ENCODE measurements at regions of chr17 and their contacts with region 1.

Region 1: DNA sequence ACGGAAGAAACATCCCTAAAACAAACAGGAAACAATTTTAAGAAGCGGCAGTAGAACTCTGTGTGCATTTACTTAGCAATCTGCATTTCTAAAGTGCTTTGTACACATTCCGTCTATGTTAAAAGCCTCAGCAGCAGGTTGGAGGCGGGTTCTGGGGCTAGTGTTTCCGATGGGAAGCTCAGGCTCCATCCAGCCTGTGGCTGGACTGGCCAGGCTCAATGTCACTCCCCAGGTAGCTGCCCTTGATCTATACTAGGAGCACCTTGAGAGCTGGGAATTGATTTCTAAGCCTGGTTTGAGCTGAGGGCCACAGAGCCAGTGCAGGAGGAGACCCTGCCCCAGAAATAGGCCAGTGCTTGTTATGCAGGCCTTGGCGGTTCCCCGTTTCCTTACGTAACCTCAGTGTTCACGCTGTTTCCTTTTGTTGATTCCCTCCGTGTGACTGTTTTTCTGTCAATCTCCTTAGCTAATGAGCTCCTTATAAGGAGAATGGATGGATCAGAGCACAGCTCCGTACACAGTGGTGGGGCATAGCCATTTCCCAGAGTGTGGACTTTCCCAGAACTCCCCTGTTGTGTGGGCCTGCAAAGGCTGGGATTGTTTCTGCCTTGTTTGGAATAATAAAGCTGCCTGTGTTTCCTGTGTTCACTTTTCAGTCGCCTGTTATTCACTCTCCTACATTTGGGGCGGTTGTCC is 21.4 kb downstream of the ADORA2B start:
- DNase-seq: no peak
- ATAC-seq: no peak
- H3K4me3 ChIP-seq: no peak overlapping the region
- H3K27ac ChIP-seq: peak overlapping the region; percentile 14 to 52 (median 32)
- H3K4me1 ChIP-seq: no peaks in the 10 kb centered on the region
- H3K27me3 ChIP-seq: no peaks in the 10 kb centered on the region
- CTCF ChIP-seq: no peak
- POLR2A ChIP-seq: no peak

Region 2: DNA sequence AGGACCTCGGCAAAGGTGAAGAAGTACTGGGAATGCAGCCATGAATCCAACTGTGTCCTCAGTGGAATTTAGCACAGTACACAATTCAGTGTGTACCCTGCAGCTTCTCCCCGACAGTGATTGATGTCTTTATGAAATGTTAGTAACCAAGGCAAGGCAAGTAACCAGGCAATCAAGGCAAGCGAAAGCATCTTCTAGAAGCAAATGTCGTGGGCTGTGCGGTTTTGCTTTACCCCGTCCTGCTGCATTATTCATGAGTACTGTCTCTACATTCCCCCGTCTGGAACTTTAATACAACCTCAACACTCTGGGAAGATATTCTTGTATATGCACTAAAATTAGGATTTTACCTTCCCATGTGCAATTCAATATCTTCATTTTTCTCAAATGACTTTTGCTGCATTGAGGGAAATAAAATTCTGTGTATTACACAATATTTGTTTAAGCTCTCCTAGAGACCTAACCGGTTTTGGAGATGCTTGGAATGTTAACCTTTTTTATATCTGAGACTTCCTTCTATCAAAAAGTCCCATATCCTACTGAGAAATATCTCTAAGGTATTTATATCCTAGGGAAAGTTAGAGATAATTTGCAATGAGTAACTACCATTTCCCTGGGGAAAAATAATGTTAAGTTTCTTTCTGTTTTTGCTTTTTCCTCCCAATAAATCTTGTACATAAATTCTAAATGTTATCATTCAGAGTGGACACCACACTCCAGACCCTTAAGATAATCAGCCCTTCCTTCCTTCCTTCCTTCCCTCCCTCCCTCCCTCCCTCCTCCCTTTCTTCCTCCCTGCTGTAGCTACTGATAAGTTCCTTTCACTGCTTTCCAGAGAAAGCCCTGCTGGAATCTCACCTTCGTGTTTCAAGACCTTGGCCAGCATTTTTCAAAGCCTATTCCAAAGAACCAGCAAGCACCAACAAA is 73.3 kb before region 1 on chr17:
- in situ Hi-C with region 1: no loop called
- intact Hi-C with region 1: no loop called
- DNase-seq: no peak
- ATAC-seq: no peak
- H3K4me3 ChIP-seq: no peak overlapping the region
- H3K27ac ChIP-seq: no peak overlapping the region
- H3K4me1 ChIP-seq: no peaks in the 10 kb centered on the region
- H3K27me3 ChIP-seq: no peaks in the 10 kb centered on the region
- CTCF ChIP-seq: no peak
- POLR2A ChIP-seq: no peak

Region 3: DNA sequence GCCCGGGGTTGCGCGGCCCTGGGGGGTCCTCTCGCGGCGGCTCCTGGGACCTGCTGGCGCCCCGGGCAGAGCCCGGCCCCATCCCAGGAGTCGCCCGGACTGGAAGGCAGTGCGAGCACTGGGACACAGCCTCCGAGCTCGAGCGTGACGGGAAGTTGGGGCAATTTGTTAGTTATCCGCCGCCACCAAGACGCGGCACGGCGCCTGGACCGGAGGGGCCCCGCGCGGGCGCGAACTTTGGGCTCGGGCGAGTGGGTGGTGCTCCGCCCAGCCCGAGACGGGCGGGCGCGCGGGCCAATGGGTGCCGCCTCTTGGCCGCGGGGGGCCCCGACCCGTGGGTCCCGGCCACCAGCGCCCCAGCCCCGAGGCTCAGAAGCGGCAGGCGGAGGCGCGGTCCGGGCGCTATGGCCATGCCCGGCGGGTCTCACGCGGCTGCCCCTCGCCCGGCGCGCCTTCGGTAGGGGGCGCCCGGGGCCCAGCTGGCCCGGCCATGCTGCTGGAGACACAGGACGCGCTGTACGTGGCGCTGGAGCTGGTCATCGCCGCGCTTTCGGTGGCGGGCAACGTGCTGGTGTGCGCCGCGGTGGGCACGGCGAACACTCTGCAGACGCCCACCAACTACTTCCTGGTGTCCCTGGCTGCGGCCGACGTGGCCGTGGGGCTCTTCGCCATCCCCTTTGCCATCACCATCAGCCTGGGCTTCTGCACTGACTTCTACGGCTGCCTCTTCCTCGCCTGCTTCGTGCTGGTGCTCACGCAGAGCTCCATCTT is 21.4 kb before region 1 on chr17 and contains the start of gene ADORA2B:
- in situ Hi-C with region 1: no loop called
- intact Hi-C with region 1: no loop called
- DNase-seq: no peak
- ATAC-seq: peak; percentile 60 to 73
- H3K4me3 ChIP-seq: peak within 1 kb of the TSS; percentile 52 to 66 (median 60)
- H3K27ac ChIP-seq: peak within 1 kb of the TSS in 1 of 4 donors; percentile 8
- H3K4me1 ChIP-seq: peaks cover 0 to 14% of the 10 kb centered on the region in 2 donors
- H3K27me3 ChIP-seq: peaks cover 14 to 29% (median 22%) of the 10 kb centered on the region in 3 donors
- CTCF ChIP-seq: peak in 4 of 5 experiments; percentile 24 to 45 (median 34)
- POLR2A ChIP-seq: no peak
- total RNA-seq, gene ADORA2B: 0.25 to 1.4 TPM in 2 of 4 donors, not detected in the others

Region 4: GRCh38 chr17:16052486-16052885 is 86.2 kb after region 1 on chr17:
- in situ Hi-C with region 1: loop called in 1 of 4 experiments (anchors 25 kb)
- intact Hi-C with region 1: no loop called
- DNase-seq: no peak
- ATAC-seq: no peak
- H3K4me3 ChIP-seq: no peak overlapping the region
- H3K27ac ChIP-seq: no peak overlapping the region
- H3K4me1 ChIP-seq: no peaks in the 10 kb centered on the region
- H3K27me3 ChIP-seq: no peaks in the 10 kb centered on the region
- CTCF ChIP-seq: no peak
- POLR2A ChIP-seq: no peak

Measured in gastrocnemius medialis (tissue), 4 donors.